ENCODE measurements at regions of chr22 and their contacts with region 1.

Region 1: DNA sequence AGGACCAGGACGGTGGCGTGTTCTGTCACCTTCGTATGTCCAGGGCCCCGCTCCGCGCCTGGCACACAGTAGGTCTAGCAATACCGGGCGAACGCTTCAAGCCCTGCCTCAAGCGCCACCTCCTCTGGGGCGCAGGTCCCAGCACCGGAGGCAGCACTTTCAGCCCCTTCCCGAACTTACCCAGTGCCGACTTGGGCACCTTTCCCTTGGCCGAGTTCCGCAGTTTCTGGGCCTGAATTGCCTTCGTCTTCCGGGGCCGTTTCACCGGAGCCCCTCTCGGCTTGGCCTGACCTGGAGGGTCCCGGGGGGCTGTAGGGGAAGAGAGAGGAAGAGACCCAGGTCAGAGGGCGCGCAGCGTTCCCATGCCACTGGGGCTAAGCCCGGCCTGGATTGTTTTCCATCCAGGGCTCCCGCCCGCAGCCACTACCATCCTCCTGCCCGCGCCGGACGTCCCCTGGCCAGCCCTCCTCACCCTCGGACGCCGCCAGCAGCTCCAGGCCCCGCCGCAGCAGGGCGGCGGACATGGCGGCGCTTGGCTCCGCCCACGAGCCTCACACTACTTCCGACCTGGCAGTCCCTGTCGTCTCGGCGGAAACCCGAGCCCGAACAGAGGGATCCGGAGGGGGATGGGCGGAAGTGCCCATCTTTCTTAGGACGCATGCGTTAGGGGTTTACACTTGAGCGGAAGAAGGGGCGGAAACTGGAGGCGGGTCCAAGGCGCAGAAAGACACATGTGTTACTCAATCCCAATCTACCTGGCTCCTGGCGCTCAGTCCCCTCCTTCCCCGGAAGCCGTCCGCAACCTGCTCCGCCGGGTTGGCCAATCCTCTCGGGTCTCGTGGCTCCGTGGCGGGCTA is at the start of gene RPS19BP1:
- DNase-seq: peak; percentile 85 to 99
- ATAC-seq: peak; percentile 67 to 78
- H3K4me3 ChIP-seq: peak within 1 kb of the TSS; percentile 98
- H3K27ac ChIP-seq: peak within 1 kb of the TSS; percentile 97 to 98
- H3K4me1 ChIP-seq: peaks cover 33% of the 10 kb centered on the region
- CTCF ChIP-seq: no peak
- EP300 ChIP-seq: no peak
- POLR2A ChIP-seq: peak; percentile 83
- RAD21 ChIP-seq: no peak
- polyA plus RNA-seq, gene RPS19BP1: 47.9 and 51.1 TPM in 2 replicates

Region 2: GRCh38 chr22:39170825-39171622 is 361.4 kb before region 1 on chr22:
- CTCF ChIA-PET with region 1: interaction called, 11 read pairs
- POLR2A ChIA-PET with region 1: no interaction called
- DNase-seq: peak; percentile 54 to 68
- ATAC-seq: peak; percentile 77 to 89
- H3K4me3 ChIP-seq: no peak overlapping the region
- H3K27ac ChIP-seq: peak overlapping the region; percentile 92 to 95
- H3K4me1 ChIP-seq: peaks cover 48% of the 10 kb centered on the region
- CTCF ChIP-seq: peak; percentile 84
- EP300 ChIP-seq: no peak
- POLR2A ChIP-seq: no peak
- RAD21 ChIP-seq: peak; percentile 93 to 96

Region 3: GRCh38 chr22:39496131-39496838 is 36.2 kb before region 1 on chr22:
- CTCF ChIA-PET with region 1: interaction called, 80 read pairs
- POLR2A ChIA-PET with region 1: no interaction called
- DNase-seq: peak; percentile 48 to 69
- ATAC-seq: peak; percentile 90 to 93
- H3K4me3 ChIP-seq: no peak overlapping the region
- H3K27ac ChIP-seq: no peak overlapping the region
- H3K4me1 ChIP-seq: peaks cover under 1% of the 10 kb centered on the region; the same call in 1 of the 3 replicates
- CTCF ChIP-seq: peak; percentile 53
- EP300 ChIP-seq: no peak
- POLR2A ChIP-seq: no peak
- RAD21 ChIP-seq: peak in 1 of 2 experiments; percentile 12; a peak in 1 of 5 replicates

Region 4: GRCh38 chr22:39520054-39520891 is 12.2 kb before region 1 on chr22 and contains the start of gene ATF4:
- CTCF ChIA-PET with region 1: interaction called, 37 read pairs
- POLR2A ChIA-PET with region 1: interaction called, 34 read pairs
- DNase-seq: peak; percentile 94 to 99
- ATAC-seq: peak; percentile 82 to 91
- H3K4me3 ChIP-seq: peak within 1 kb of the TSS; percentile 98
- H3K27ac ChIP-seq: peak within 1 kb of the TSS; percentile 96 to 99
- H3K4me1 ChIP-seq: peaks cover 25% of the 10 kb centered on the region
- CTCF ChIP-seq: no peak
- EP300 ChIP-seq: no peak
- POLR2A ChIP-seq: peak; percentile 87
- RAD21 ChIP-seq: no peak
- polyA plus RNA-seq, gene ATF4: 557 and 593 TPM in 2 replicates

Region 5: GRCh38 chr22:39556970-39557841 is 24.8 kb after region 1 on chr22:
- CTCF ChIA-PET with region 1: interaction called, 16 read pairs
- POLR2A ChIA-PET with region 1: no interaction called
- DNase-seq: peak; percentile 33 to 38
- ATAC-seq: peak; percentile 55 to 58; a peak in 5 of 6 replicates
- H3K4me3 ChIP-seq: peak overlapping the region; percentile 41
- H3K27ac ChIP-seq: peak overlapping the region; percentile 35 to 84; a peak in 5 of 6 replicates
- H3K4me1 ChIP-seq: 0 out of 3 replicates have a peak, but pooled peaks cover 5% of the 10 kb centered on the region
- CTCF ChIP-seq: peak; percentile 34; the same call in 2 of the 3 replicates
- EP300 ChIP-seq: no peak
- POLR2A ChIP-seq: no peak
- RAD21 ChIP-seq: peak; percentile 56 to 58

Region 6: GRCh38 chr22:40036591-40037225 is 504.3 kb after region 1 on chr22:
- CTCF ChIA-PET with region 1: interaction called, 899 read pairs
- POLR2A ChIA-PET with region 1: interaction called, 3 read pairs
- DNase-seq: peak; percentile 69 to 82
- ATAC-seq: peak; percentile 94 to 98
- H3K4me3 ChIP-seq: no peak overlapping the region
- H3K27ac ChIP-seq: no peak overlapping the region
- H3K4me1 ChIP-seq: no peaks in the 10 kb centered on the region
- CTCF ChIP-seq: peak; percentile 74
- EP300 ChIP-seq: no peak
- POLR2A ChIP-seq: no peak
- RAD21 ChIP-seq: peak; percentile 87 to 91

Measured in A549 (cell line).